ENCODE measurements at regions of chr9 and their contacts with region 1.

Region 1: DNA sequence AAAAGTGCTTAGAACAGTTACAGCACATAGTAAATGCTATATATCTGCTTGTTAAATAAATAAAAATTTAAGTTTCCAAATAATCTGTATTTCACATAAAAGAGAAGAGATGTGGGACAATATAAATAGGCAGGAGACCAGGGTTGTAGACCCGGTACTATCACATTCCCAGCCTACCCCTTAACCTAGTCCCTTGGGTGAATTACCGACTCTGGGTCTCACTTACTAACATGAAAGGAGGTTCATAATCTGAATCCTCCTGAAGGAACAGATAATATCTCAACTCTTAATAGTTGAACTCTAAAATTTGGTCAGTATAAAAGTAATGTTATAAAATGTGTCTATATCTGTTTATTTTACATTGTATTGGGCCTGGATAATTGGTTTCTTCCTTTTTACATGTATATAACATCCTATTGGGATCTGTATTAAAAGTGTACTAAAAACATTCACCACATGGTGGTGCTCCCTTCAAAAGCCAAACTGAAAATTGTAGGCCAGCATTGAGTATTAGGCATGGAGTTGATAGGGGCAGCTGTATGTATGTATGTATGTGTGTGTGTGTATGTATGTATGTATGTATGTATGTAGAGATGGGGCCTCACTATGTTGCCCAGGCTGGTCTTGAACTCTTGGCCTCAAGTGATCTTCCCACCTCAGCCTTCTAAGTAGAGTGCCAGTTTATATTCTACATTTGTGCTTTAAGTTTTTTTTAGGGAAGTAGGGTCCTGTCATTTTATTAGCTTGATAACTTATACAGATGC is 64.2 kb upstream of the ABL1 start:
- DNase-seq: no peak
- H3K4me3 ChIP-seq: no peak overlapping the region
- H3K27ac ChIP-seq: peak overlapping the region in 3 of 4 donors; percentile 42 to 51 (median 46)
- H3K4me1 ChIP-seq: peaks cover 0 to 60% (median 34%) of the 10 kb centered on the region in 4 donors
- H3K27me3 ChIP-seq: no peaks in the 10 kb centered on the region
- CTCF ChIP-seq: peak in 3 of 4 experiments; percentile 70 to 82 (median 74)
- EP300 ChIP-seq: no peak
- POLR2A ChIP-seq: no peak

Region 2: GRCh38 chr9:130707225-130707976 is 63.5 kb before region 1 on chr9:
- intact Hi-C with region 1: loop called (anchors 2 kb)
- DNase-seq: peak; percentile 77
- H3K4me3 ChIP-seq: no peak overlapping the region
- H3K27ac ChIP-seq: no peak overlapping the region
- H3K4me1 ChIP-seq: peaks cover 0 to 6% (median 5%) of the 10 kb centered on the region in 4 donors
- H3K27me3 ChIP-seq: no peaks in the 10 kb centered on the region
- CTCF ChIP-seq: peak; percentile 42 to 73 (median 64)
- EP300 ChIP-seq: no peak
- POLR2A ChIP-seq: no peak

Region 3: DNA sequence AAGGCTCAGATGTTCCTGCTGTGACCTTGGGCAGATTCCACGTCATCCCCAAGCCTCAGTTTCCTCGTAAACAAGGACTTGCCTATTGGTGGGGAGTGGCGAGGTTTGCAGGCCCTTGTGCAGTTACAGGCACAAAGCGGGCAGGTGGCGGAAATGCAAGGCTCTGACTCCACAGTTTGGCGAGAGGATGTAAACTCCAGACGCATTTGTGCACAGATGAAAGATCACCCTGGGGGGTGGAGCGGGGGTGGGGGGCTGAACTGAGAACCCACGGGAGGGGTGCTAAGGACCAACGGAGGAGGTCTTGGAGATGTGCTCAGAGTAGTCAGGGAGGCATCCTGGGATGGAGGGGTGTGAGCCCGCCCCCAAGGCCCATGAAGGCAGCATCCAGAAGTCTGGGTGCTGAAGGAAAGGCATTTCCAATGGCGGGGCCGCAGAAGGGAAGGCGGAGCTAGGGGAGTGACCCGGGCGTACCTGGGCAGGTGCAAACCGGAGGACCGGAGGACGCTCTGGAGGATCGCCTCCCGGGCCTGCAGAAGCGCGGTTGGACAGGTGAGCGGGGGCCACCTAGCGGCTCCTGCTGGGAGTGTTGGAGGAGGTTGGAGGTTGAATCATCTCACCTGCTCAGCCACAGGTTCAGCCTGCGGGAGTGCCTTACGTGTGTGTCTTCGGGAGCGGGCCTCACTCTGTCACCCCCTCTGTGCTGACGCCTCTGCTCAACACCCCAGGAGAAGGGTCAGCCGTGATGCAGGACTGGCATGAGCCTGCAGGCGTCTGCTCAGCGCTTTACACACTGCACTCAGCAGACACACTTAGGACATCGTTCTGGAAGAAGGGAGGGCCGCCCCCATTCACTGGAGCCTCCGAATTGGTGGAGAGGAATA is 170.1 kb after region 1 on chr9:
- intact Hi-C with region 1: loop called (anchors 5 kb)
- DNase-seq: peak; percentile 79
- H3K4me3 ChIP-seq: no peak overlapping the region
- H3K27ac ChIP-seq: no peak overlapping the region
- H3K4me1 ChIP-seq: peaks cover 0 to 42% (median 29%) of the 10 kb centered on the region in 4 donors
- H3K27me3 ChIP-seq: peaks cover 32 to 62% (median 60%) of the 10 kb centered on the region in 3 donors
- CTCF ChIP-seq: peak; percentile 80 to 86 (median 82)
- EP300 ChIP-seq: no peak
- POLR2A ChIP-seq: no peak

Region 4: GRCh38 chr9:131046581-131047202 is 275.8 kb after region 1 on chr9:
- intact Hi-C with region 1: loop called (anchors 10 kb)
- DNase-seq: peak; percentile 77
- H3K4me3 ChIP-seq: no peak overlapping the region
- H3K27ac ChIP-seq: no peak overlapping the region
- H3K4me1 ChIP-seq: peaks cover 0 to 6% (median 2%) of the 10 kb centered on the region in 4 donors
- H3K27me3 ChIP-seq: peaks cover 0 to 5% (median 0%) of the 10 kb centered on the region in 3 donors
- CTCF ChIP-seq: peak; percentile 67 to 91 (median 78)
- EP300 ChIP-seq: no peak
- POLR2A ChIP-seq: no peak